WTC11 (cell line): ENCODE measurements at regions of chr11 and their contacts with region 1.

Region 1: GRCh38 chr11:12331239-12331874 is 46.0 kb upstream of the PARVA start:
- DNase-seq: peak; percentile 85
- ATAC-seq: peak; percentile 91
- H3K4me3 Mint-ChIP-seq: peak overlapping the region; percentile 22
- H3K27ac Mint-ChIP-seq: no peak overlapping the region
- H3K4me1 Mint-ChIP-seq: peaks cover 12% of the 10 kb centered on the region
- H3K27me3 Mint-ChIP-seq: no peaks in the 10 kb centered on the region; the same call in 1 of the 2 replicates
- CTCF ChIP-seq: peak; percentile 48

Region 2: DNA sequence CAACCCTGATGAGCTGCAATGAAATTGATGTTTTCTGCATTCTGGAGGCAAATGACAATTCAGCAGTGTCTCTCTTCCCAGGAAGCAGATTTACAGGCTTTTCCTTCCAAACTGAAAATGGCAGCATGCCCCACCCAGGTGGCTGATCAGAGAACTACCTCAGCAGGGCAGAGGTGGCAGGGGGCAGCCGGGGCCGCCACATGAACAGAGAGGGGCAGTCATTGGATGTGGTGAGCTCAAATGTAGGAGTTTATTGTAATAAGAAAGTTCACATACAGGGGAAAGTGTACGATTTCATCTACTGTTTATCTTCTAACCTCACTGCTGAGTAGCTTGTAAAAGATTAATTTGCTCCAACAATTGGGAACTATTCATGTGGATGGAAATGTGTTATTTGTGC is 30.3 kb after region 1 on chr11:
- CTCF ChIA-PET with region 1: interaction called, 16 read pairs
- POLR2A ChIA-PET with region 1: no interaction called
- DNase-seq: no peak
- ATAC-seq: no peak
- H3K4me3 Mint-ChIP-seq: no peak overlapping the region
- H3K27ac Mint-ChIP-seq: no peak overlapping the region
- H3K4me1 Mint-ChIP-seq: peaks cover 23% of the 10 kb centered on the region
- H3K27me3 Mint-ChIP-seq: no peaks in the 10 kb centered on the region
- CTCF ChIP-seq: no peak

Region 3: GRCh38 chr11:12411806-12412727 is 80.7 kb after region 1 on chr11:
- CTCF ChIA-PET with region 1: interaction called, 20 read pairs
- POLR2A ChIA-PET with region 1: no interaction called
- DNase-seq: peak; percentile 85
- ATAC-seq: peak; percentile 92
- H3K4me3 Mint-ChIP-seq: no peak overlapping the region
- H3K27ac Mint-ChIP-seq: peak overlapping the region; percentile 80
- H3K4me1 Mint-ChIP-seq: peaks cover 52% of the 10 kb centered on the region
- H3K27me3 Mint-ChIP-seq: no peaks in the 10 kb centered on the region
- CTCF ChIP-seq: peak; percentile 62; the same call in 1 of the 2 replicates

Region 4: GRCh38 chr11:12599408-12600143 is 268.2 kb after region 1 on chr11:
- CTCF ChIA-PET with region 1: interaction called, 13 read pairs
- POLR2A ChIA-PET with region 1: no interaction called
- DNase-seq: peak; percentile 81
- ATAC-seq: peak; percentile 95
- H3K4me3 Mint-ChIP-seq: no peak overlapping the region
- H3K27ac Mint-ChIP-seq: no peak overlapping the region
- H3K4me1 Mint-ChIP-seq: peaks cover 15% of the 10 kb centered on the region
- H3K27me3 Mint-ChIP-seq: no peaks in the 10 kb centered on the region
- CTCF ChIP-seq: peak; percentile 90

Region 5: GRCh38 chr11:12680246-12680939 is 349.0 kb after region 1 on chr11:
- CTCF ChIA-PET with region 1: interaction called, 14 read pairs
- POLR2A ChIA-PET with region 1: no interaction called
- DNase-seq: peak; percentile 91
- ATAC-seq: peak; percentile 84
- H3K4me3 Mint-ChIP-seq: peak overlapping the region; percentile 70
- H3K27ac Mint-ChIP-seq: peak overlapping the region; percentile 99
- H3K4me1 Mint-ChIP-seq: peaks cover 95% of the 10 kb centered on the region
- H3K27me3 Mint-ChIP-seq: peaks cover 10% of the 10 kb centered on the region
- CTCF ChIP-seq: no peak

Region 6: GRCh38 chr11:12893787-12894672 is 562.7 kb after region 1 on chr11:
- CTCF ChIA-PET with region 1: interaction called, 42 read pairs
- POLR2A ChIA-PET with region 1: no interaction called
- DNase-seq: peak; percentile 84
- ATAC-seq: peak; percentile 61
- H3K4me3 Mint-ChIP-seq: no peak overlapping the region
- H3K27ac Mint-ChIP-seq: peak overlapping the region; percentile 30
- H3K4me1 Mint-ChIP-seq: peaks cover 27% of the 10 kb centered on the region
- H3K27me3 Mint-ChIP-seq: no peaks in the 10 kb centered on the region
- CTCF ChIP-seq: peak; percentile 80